Breast epithelium (tissue), 4 donors: ENCODE measurements at regions of chr1 and their contacts with region 1.

Region 1: DNA sequence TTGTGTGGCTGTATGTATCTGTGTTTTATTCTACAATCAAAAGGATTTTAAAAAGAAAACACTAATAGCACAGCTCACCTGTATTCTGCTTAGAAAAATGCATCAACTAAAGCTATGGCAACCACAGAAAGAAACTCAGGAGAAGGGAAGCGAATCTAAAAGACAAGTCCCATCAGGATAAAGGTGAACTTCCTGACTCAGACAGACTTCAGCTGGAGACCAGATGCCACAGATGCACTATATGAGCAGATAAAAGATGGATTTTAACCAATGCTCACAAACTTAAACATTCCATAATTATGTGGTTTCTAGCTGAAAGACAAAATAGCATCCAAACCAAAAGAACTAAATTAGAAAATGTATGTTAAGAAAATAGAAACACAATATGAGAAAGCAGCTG is 231.0 kb downstream of the RERE start:
- DNase-seq: no peak
- H3K4me3 ChIP-seq: no peak overlapping the region
- H3K27ac ChIP-seq: no peak overlapping the region
- H3K4me1 ChIP-seq: no peaks in the 10 kb centered on the region
- H3K27me3 ChIP-seq: no peaks in the 10 kb centered on the region
- CTCF ChIP-seq: no peak
- POLR2A ChIP-seq: no peak

Region 2: DNA sequence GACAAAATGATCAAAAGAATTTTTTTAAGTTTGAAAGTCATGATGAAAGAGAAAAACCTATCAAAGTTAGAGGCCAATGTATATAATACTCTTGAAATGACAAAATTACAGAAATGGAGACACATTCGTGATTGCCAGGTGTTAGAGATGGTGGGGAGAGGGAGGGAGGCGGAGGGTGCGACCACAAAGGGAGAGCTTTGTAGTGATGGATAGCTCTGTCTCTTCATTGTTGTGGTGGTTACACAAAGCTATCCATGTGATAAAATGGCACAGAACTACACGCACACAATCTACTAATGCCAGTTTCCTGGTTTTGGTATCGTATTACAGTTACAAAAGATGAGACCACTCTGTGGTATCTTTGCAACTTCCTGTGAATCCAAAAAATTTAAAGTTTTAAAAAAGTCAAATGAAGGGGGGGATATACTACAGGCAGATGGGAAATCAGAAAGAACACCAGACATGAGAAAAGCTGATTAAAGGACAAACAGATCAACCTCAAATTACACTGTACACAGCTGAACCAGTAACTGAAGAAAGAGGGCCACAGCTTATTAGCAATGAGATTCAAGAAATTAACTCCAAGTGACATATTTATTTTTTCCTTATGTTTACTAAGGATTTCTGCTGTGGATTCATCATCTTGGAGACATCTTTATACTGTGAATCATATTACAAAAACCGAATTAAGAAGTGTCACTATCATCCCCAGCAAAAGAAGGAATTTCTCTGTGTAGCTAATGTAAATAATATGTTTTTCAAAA is 69.5 kb before region 1 on chr1:
- intact Hi-C with region 1: no loop called
- DNase-seq: no peak
- H3K4me3 ChIP-seq: no peak overlapping the region
- H3K27ac ChIP-seq: peak overlapping the region in 1 of 2 donors; percentile 29
- H3K4me1 ChIP-seq: no peaks in the 10 kb centered on the region
- H3K27me3 ChIP-seq: no peaks in the 10 kb centered on the region
- CTCF ChIP-seq: no peak
- POLR2A ChIP-seq: no peak

Region 3: DNA sequence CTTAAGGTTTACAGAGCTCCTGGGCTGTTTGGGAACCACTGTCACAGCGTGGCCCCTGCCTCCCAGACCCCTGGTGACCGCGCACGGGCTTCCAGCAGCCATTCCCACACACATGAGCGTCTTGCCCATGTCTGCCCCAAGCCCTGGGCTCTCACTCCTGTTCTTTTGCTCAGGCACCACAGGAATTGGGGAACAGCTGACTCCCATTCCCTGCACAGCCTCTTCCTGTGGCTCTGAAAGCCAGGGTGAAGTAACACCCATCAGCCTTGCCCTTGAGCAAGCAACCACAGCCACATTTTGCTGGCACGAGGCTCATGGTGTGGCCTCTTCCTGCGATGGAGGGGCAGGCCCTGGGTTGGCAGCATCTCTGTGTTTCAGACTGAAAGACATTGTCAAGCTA is 556.8 kb after region 1 on chr1:
- intact Hi-C with region 1: loop called (anchors 5 kb)
- DNase-seq: peak in 1 of 2 donors; percentile 68
- H3K4me3 ChIP-seq: no peak overlapping the region
- H3K27ac ChIP-seq: peak overlapping the region; percentile 56 to 61
- H3K4me1 ChIP-seq: no peaks in the 10 kb centered on the region
- H3K27me3 ChIP-seq: no peaks in the 10 kb centered on the region
- CTCF ChIP-seq: no peak
- POLR2A ChIP-seq: no peak